Right lobe of liver (tissue), 6 donors: ENCODE measurements at regions of chr13 and their contacts with region 1.

Region 1: DNA sequence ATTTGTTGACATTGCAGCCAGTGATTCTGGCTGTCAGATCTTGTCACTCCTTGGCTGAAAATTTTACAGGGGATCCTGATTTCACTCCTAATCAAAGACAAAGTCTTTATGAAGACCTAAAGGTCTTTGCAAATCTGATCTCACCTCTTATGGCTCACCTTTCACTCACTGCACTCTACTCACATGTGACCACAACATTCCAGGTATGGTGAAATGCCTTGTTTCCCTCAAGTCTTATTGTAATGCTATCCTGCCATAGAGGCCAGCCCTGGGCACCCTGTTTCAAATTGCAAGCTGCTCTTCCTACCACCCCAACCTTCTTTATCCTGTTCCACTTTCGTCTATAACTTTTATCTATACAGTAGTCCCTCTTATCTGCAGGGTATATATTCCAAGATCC is 200.1 kb downstream of the NDFIP2 start:
- DNase-seq: no peak
- ATAC-seq: no peak
- H3K4me3 ChIP-seq: no peak overlapping the region
- H3K27ac ChIP-seq: no peak overlapping the region
- H3K4me1 ChIP-seq: no peaks in the 10 kb centered on the region
- H3K27me3 ChIP-seq: no peaks in the 10 kb centered on the region
- CTCF ChIP-seq: no peak
- POLR2A ChIP-seq: no peak

Region 2: DNA sequence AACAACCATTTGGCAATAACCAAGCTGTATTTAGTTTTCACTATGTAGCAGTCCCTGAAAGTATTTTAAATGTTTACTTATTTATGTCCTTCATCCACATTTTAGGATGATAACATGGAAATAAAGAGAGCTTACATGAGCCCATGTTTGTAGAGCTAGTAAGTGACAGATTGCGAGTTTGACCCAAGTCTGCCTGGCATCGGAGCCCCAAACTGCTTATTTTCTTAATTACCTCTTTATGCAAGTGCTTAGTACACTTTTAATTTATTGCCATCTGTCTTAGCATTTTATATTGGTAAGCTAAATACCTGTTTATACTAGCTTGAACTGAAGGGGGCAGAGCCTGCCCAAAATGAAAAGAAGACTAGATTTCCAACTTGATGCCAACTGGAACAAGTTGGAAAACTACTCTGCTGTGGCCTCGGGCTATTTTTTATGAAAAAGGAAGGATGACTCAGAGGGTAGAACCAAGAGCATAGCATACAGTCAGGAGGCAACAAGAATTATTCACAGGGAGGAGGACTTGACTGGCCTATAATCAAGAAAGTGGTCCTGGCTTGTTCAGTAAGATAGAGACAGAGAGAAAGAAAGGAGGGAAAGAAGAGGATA is 49.9 kb before region 1 on chr13:
- intact Hi-C with region 1: no loop called
- DNase-seq: no peak
- ATAC-seq: no peak
- H3K4me3 ChIP-seq: no peak overlapping the region
- H3K27ac ChIP-seq: no peak overlapping the region
- H3K4me1 ChIP-seq: no peaks in the 10 kb centered on the region
- H3K27me3 ChIP-seq: no peaks in the 10 kb centered on the region
- CTCF ChIP-seq: no peak
- POLR2A ChIP-seq: no peak

Region 3: GRCh38 chr13:79799059-79799867 is 118.2 kb after region 1 on chr13:
- intact Hi-C with region 1: no loop called
- DNase-seq: no peak
- ATAC-seq: no peak
- H3K4me3 ChIP-seq: no peak overlapping the region
- H3K27ac ChIP-seq: no peak overlapping the region
- H3K4me1 ChIP-seq: no peaks in the 10 kb centered on the region
- H3K27me3 ChIP-seq: no peaks in the 10 kb centered on the region
- CTCF ChIP-seq: no peak
- POLR2A ChIP-seq: no peak

Region 4: DNA sequence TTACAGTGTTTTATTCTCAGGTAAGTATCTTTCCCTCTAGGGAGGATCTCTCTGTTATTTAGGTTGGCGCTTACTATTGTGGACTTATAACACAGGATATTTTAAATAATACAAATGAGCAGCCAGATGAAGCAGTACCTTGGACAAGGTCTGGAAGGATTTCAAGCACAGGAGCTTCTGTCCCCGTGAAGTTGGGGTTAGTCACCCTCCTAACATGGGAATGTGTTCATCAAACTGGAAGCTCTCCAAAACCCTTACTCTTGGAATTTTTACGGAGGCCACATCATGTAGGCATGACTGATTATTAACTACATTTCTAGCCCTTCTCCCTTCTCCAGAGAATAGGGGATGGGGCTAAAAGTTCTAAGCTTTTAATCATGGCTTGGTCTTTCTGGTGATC is 698.2 kb after region 1 on chr13:
- intact Hi-C with region 1: loop called in 1 of 2 experiments (anchors 10 kb)
- DNase-seq: no peak
- ATAC-seq: peak; percentile 34 to 96 (median 53)
- H3K4me3 ChIP-seq: no peak overlapping the region
- H3K27ac ChIP-seq: no peak overlapping the region
- H3K4me1 ChIP-seq: no peaks in the 10 kb centered on the region
- H3K27me3 ChIP-seq: no peaks in the 10 kb centered on the region
- CTCF ChIP-seq: no peak
- POLR2A ChIP-seq: no peak